ENCODE measurements at regions of chr9 and their contacts with region 1.

Region 1: DNA sequence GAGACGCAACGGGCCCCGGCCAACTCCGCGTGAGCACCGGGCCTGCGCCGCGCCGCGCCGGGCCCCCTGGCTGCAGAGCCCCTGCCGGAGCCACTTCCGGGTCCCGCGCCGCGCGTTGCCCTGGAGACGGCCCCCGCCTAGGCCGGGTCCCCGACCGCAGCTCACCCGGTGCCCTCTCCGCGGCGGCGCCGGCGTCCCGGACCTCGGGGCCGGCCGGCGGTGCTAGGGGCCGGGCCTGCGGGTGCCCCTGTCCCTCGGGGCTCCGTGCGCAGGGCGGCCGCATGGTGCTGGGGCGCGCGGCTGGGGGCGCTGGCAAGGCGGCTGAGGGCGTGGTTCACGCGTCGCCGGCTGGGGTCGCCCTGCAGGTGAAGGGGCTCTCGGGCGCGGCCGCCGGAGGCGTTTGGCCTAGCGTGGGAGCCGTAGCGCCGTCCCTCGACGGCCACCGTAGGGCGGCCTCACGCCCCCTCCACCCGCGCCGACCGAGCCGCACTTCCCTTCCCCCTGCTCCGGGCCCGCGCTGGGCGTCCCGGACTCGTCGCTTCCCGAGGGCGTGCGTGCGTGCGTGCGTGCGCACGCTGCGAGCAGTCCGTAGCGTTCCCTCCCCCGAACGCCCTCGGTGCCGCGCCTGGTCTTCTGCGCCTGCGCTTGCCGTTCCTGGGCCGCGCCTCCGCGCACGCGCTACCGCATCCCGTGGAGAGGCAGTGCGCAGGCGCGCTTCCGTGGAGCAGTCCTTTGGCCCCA is at the start of gene TMEM250:
- DNase-seq: peak in 1 of 2 donors; percentile 95
- H3K4me3 ChIP-seq: peak within 1 kb of the TSS; percentile 67 to 92
- H3K27ac ChIP-seq: peak within 1 kb of the TSS; percentile 92
- H3K4me1 ChIP-seq: peaks cover 42% of the 10 kb centered on the region
- H3K27me3 ChIP-seq: no peaks in the 10 kb centered on the region
- CTCF ChIP-seq: no peak
- POLR2A ChIP-seq: no peak
- total RNA-seq, gene TMEM250: 25.0 TPM

Region 2: GRCh38 chr9:135864447-135865049 is 253.9 kb before region 1 on chr9:
- intact Hi-C with region 1: loop called (anchors 5 kb)
- DNase-seq: no peak
- H3K4me3 ChIP-seq: no peak overlapping the region
- H3K27ac ChIP-seq: no peak overlapping the region
- H3K4me1 ChIP-seq: no peaks in the 10 kb centered on the region
- H3K27me3 ChIP-seq: no peaks in the 10 kb centered on the region
- CTCF ChIP-seq: peak; percentile 44 to 65 (median 60)
- POLR2A ChIP-seq: no peak

Region 3: GRCh38 chr9:135963938-135964337 is 154.6 kb before region 1 on chr9:
- intact Hi-C with region 1: loop called (anchors 2 kb)
- DNase-seq: no peak
- H3K4me3 ChIP-seq: no peak overlapping the region
- H3K27ac ChIP-seq: no peak overlapping the region
- H3K4me1 ChIP-seq: peaks cover 27% of the 10 kb centered on the region
- H3K27me3 ChIP-seq: no peaks in the 10 kb centered on the region
- CTCF ChIP-seq: no peak
- POLR2A ChIP-seq: no peak

Region 4: GRCh38 chr9:135971892-135972291 is 146.6 kb before region 1 on chr9:
- intact Hi-C with region 1: loop called (anchors 2 kb)
- DNase-seq: no peak
- H3K4me3 ChIP-seq: no peak overlapping the region
- H3K27ac ChIP-seq: no peak overlapping the region
- H3K4me1 ChIP-seq: peaks cover 9% of the 10 kb centered on the region
- H3K27me3 ChIP-seq: no peaks in the 10 kb centered on the region
- CTCF ChIP-seq: no peak
- POLR2A ChIP-seq: no peak

Region 5: GRCh38 chr9:136093995-136094881 is 24.3 kb before region 1 on chr9:
- intact Hi-C with region 1: loop called (anchors 2 kb)
- DNase-seq: no peak
- H3K4me3 ChIP-seq: peak overlapping the region; percentile 59 to 86
- H3K27ac ChIP-seq: peak overlapping the region; percentile 85
- H3K4me1 ChIP-seq: peaks cover 59% of the 10 kb centered on the region
- H3K27me3 ChIP-seq: no peaks in the 10 kb centered on the region
- CTCF ChIP-seq: no peak
- POLR2A ChIP-seq: peak in 1 of 2 donors; percentile 9

Measured in vagina (tissue), 2 donors.